Activated T-helper 1 cell treated with anti-CD3 and anti-CD28 coated beads, Interleukin-12 subunit alpha, Interleukin-12 subunit beta, Interleukin-2, Interleukin-4 antibody, amounts not matched to agents 30 ng/mL and 10 ng/mL and 1 ng/mL, durations not matched to agents 14 hours and 24 hours and 36 hours (primary cell): ENCODE measurements at regions of chr2 and their contacts with region 1.

Region 1: DNA sequence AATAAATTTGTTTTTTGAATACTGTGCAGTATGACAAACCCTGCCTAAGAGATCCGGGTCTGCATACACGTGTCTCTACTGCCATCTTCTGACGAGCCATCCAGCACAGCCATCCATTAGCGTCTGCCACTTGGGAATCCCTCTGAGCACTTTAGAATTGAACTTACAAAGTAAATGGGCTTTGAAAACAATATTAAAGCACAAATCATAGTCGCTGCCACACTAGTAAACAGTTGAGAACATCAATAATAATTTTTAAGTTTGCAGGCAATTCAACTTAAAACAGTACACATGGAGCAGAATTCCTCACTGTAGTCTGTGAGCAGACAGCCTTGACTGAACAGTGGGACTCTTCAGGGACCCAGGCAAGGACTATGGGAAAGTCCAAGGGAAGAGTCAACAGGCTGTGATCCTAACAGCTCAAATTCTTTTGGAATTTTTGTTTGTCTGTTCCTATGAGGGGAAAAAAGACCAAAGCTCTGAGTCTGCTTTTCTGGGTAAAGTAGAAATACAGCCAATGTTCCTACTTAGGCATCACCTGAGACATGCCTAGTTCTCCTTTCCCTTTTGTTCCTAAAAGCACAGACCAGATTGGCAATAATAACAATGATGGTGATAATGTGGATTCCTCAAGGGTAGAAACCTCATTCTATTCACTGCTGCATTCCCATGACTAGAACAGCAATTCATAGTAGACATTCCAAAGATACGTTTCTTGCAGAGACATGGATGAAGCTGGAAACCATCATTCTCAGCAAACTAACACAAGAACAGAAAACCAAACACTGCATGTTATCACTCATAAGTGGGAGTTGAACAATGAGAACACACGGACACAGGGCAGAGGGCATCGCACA is 92.9 kb downstream of the MREG start:
- DNase-seq: peak; percentile 19
- H3K4me3 Mint-ChIP-seq: no peak overlapping the region
- H3K27ac Mint-ChIP-seq: no peak overlapping the region
- H3K4me1 Mint-ChIP-seq: peaks cover 7% of the 10 kb centered on the region
- H3K27me3 Mint-ChIP-seq: peaks cover 7% of the 10 kb centered on the region

Region 2: GRCh38 chr2:215454519-215455246 is 465.8 kb before region 1 on chr2:
- intact Hi-C with region 1: loop called (anchors 1 kb)
- DNase-seq: no peak
- H3K4me3 Mint-ChIP-seq: no peak overlapping the region
- H3K27ac Mint-ChIP-seq: no peak overlapping the region
- H3K4me1 Mint-ChIP-seq: no peaks in the 10 kb centered on the region
- H3K27me3 Mint-ChIP-seq: peaks cover 24% of the 10 kb centered on the region